Activated T-helper 2 cell treated with anti-CD3 and anti-CD28 coated beads, Interferon-gamma antibody, Interleukin-2, Interleukin-4, amounts not matched to agents 10 μg/mL and 5 μg/mL and 100 μg/mL, durations not matched to agents 14 hours and 24 hours and 36 hours (primary cell): ENCODE measurements at regions of chr9 and their contacts with region 1.

Region 1: GRCh38 chr9:35116898-35117551 is 1.4 kb upstream of the ATOSB start:
- DNase-seq: peak; percentile 81
- H3K4me3 Mint-ChIP-seq: peak overlapping the region; percentile 91
- H3K27ac Mint-ChIP-seq: peak overlapping the region; percentile 89
- H3K4me1 Mint-ChIP-seq: peaks cover 36% of the 10 kb centered on the region
- H3K27me3 Mint-ChIP-seq: peaks cover 8% of the 10 kb centered on the region

Region 2: DNA sequence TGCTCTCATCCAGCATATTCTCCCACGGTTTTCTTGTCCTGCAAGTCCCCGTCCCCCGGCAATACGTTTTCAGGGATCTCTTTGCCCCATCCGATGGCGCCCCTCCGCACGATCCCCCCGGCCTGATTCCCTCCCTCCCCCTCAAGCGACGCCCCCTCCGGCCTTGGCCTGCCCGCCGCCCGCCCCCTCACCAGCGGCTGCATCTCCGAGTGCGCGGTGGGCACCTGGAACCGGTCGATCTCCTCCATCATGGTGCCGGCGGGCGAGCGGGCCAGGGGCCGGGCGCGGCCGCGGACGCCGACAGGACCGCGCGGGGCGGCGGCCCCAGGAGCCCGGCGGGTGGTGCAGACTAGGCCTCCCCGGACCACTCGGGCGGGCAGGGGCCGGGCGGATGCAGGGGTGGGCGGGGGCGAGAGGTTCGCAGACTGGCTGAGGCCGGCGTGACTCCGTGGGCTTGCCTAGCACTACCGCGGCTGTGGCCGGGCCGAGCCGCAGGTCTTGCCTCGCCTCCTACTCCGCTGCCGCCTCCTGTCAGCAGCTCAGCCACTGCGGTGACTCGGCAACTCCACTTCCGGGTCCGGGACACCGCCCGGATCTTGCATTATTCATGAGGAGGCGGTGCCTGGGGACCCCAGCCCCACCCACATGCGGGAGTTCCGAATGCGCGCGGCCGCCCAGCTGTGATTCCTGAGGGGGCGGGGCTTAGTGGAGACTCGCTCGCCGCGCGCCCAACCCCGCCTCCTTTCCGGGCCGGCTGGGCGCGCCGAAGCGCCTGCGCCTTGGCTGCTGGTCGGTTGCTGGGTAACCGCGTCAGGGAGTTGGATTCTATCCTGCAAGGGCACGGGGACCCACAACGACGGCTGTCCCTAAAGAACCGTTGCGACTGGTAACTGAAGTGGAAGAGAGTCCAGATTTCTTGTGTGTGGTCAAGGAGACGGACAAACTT is 658.7 kb before region 1 on chr9 and contains the starts of genes DNAI1 and FAM219A:
- intact Hi-C with region 1: loop called (anchors 10 kb)
- DNase-seq: peak; percentile 99
- H3K4me3 Mint-ChIP-seq: peak within 1 kb of the TSS; percentile 88
- H3K27ac Mint-ChIP-seq: peak within 1 kb of the TSS; percentile 60
- H3K4me1 Mint-ChIP-seq: peaks cover 43% of the 10 kb centered on the region
- H3K27me3 Mint-ChIP-seq: peaks cover 17% of the 10 kb centered on the region
- total RNA-seq, gene DNAI1: not detected in 2 replicates
- total RNA-seq, gene FAM219A: 17.3 and 19.7 TPM in 2 replicates

Region 3: GRCh38 chr9:34884732-34885131 is 232.3 kb before region 1 on chr9:
- intact Hi-C with region 1: no loop called
- DNase-seq: no peak
- H3K4me3 Mint-ChIP-seq: no peak overlapping the region
- H3K27ac Mint-ChIP-seq: no peak overlapping the region
- H3K4me1 Mint-ChIP-seq: no peaks in the 10 kb centered on the region
- H3K27me3 Mint-ChIP-seq: peaks cover 7% of the 10 kb centered on the region

Region 4: GRCh38 chr9:35186524-35186923 is 69.5 kb after region 1 on chr9:
- intact Hi-C with region 1: no loop called
- DNase-seq: no peak
- H3K4me3 Mint-ChIP-seq: no peak overlapping the region
- H3K27ac Mint-ChIP-seq: no peak overlapping the region
- H3K4me1 Mint-ChIP-seq: no peaks in the 10 kb centered on the region
- H3K27me3 Mint-ChIP-seq: no peaks in the 10 kb centered on the region

Region 5: DNA sequence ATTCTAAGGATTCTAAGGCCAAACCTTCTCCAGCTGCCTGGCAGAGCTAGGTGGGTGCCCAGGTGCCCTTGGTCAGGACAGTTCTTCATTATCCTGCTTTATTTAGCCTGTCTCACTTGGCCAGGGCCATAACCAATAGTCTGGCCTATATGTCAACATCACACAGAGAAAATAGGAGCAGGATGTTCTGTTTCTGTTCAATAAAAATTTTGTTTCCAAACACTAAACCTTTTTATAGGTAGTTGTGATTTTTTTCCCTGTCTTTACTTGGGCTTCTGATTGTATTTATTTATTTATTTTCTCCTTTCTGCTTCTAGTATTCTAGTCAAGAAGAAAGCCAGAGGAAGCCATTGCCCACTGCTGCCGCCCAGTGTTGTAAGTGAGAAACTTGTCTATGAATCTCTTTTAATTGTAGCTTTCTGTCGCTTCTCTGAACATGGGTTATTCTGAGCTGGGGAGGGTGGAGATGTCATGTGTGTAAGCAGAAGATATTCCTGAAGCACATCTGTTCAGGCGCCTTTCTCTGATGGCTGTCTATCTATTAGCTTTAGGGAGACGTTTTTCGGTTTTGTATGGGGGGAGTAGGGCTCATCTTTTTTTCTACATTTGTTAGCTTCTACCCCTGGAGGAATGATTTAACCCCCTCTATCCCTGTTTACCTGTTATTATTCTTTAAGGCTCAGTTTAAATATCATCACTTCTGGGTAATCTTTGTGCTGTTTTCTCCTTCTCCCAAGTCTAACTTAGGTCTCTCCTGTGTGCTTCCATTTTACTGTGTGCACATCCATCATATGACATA is 141.8 kb after region 1 on chr9:
- intact Hi-C with region 1: loop called (anchors 1 kb)
- DNase-seq: peak; percentile 16
- H3K4me3 Mint-ChIP-seq: no peak overlapping the region
- H3K27ac Mint-ChIP-seq: no peak overlapping the region
- H3K4me1 Mint-ChIP-seq: no peaks in the 10 kb centered on the region
- H3K27me3 Mint-ChIP-seq: peaks cover 6% of the 10 kb centered on the region

Region 6: GRCh38 chr9:35553670-35554543 is 436.9 kb after region 1 on chr9:
- intact Hi-C with region 1: loop called (anchors 1 kb)
- DNase-seq: peak; percentile 16
- H3K4me3 Mint-ChIP-seq: no peak overlapping the region
- H3K27ac Mint-ChIP-seq: no peak overlapping the region
- H3K4me1 Mint-ChIP-seq: no peaks in the 10 kb centered on the region
- H3K27me3 Mint-ChIP-seq: no peaks in the 10 kb centered on the region

Region 7: GRCh38 chr9:35646533-35647265 is 529.7 kb after region 1 on chr9:
- intact Hi-C with region 1: loop called (anchors 2 kb)
- DNase-seq: peak; percentile 91
- H3K4me3 Mint-ChIP-seq: peak overlapping the region; percentile 96
- H3K27ac Mint-ChIP-seq: peak overlapping the region; percentile 96
- H3K4me1 Mint-ChIP-seq: peaks cover 45% of the 10 kb centered on the region
- H3K27me3 Mint-ChIP-seq: no peaks in the 10 kb centered on the region